Motor neuron (in vitro differentiated cells): ENCODE measurements at regions of chr12 and their contacts with region 1.

Region 1: DNA sequence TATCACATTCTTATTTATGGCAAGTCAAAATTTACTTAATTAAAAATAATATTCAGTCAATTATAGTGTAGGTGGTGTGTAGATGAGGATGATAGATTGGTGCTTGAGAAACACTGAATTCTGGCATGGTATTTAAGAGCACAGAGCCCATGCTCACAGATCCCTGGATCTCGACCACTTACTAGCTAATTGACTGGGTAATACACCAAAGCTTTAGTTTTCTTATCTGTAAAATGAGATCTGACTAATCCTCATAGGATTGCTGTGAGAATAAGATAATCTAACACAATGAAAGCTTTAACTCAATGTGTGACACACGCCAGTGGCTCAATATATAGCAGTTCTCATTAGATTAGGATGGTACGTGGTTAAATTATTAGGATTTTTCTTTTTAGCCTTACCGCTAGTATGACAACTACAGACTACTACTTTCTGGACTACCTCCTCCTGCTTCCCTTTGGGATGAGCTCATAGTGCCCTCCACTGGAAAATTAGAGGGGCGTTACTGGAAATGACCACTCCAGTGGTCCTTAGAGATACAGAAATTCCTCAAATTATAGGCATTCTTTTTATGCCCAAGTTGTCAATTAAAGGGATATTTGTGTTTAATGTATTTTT is 482.8 kb upstream of the TBX3 start:
- ATAC-seq: no peak
- H3K4me3 ChIP-seq: no peak overlapping the region
- H3K27ac ChIP-seq: no peak overlapping the region
- H3K4me1 ChIP-seq: no peaks in the 10 kb centered on the region

Region 2: GRCh38 chr12:114976959-114977358 is 189.8 kb before region 1 on chr12:
- in situ Hi-C with region 1: no loop called
- ATAC-seq: peak in 5 of 8 experiments; percentile 25 to 94 (median 39)
- H3K4me3 ChIP-seq: no peak overlapping the region
- H3K27ac ChIP-seq: no peak overlapping the region
- H3K4me1 ChIP-seq: no peaks in the 10 kb centered on the region

Region 3: DNA sequence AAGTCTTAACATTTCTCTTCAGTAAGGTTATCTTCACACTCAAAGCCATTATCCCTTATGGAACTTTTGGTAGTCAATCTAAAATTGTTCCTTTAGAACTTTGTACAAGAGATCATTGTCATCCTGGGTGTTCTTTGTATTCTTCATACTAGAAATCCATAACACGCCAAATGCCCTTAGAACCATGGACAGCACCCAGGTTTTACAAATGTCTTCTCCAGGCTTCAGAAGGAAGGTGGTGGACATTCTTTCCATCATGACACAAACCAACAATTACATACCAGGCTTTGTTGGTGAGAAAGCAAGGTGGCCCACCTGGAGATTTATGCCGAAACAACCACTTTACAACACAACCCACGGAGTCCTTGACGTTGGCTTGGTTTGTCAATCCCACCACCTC is 117.2 kb before region 1 on chr12:
- in situ Hi-C with region 1: loop called in 1 of 9 experiments (anchors 25 kb)
- ATAC-seq: no peak
- H3K4me3 ChIP-seq: no peak overlapping the region
- H3K27ac ChIP-seq: no peak overlapping the region
- H3K4me1 ChIP-seq: no peaks in the 10 kb centered on the region

Region 4: GRCh38 chr12:115740586-115741155 is 573.9 kb after region 1 on chr12:
- in situ Hi-C with region 1: no loop called
- ATAC-seq: no peak
- H3K4me3 ChIP-seq: no peak overlapping the region
- H3K27ac ChIP-seq: no peak overlapping the region
- H3K4me1 ChIP-seq: no peaks in the 10 kb centered on the region